Heart right ventricle (tissue), 16 donors: ENCODE measurements at regions of chr5 and their contacts with region 1.

Region 1: DNA sequence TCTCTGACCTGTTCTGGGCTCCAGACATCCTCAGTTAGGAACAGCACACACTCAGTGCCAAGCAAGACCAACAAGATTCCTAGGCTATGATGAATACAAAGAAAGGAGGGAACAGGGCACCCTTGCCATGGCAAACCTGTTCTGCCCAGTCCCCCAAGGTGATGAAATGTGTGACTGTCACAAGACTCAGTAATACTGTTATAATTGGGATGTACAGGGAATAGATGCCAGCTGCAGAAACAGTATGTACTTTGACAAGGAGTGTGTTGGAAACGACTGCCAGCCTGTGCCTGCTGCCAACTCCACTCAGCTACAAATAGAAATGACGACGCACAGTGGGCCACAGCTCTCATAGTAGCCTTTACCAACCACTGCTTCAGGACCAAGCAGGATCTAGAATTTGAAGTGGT is 453.0 kb downstream of the EFNA5 start:
- DNase-seq: peak; percentile 64 to 79
- ATAC-seq: peak; percentile 88 to 99 (median 97)
- H3K4me3 ChIP-seq: no peak overlapping the region
- H3K27ac ChIP-seq: peak overlapping the region; percentile 55 to 83 (median 72)
- H3K4me1 ChIP-seq: peaks cover 0 to 35% (median 7%) of the 10 kb centered on the region in 9 donors
- H3K27me3 ChIP-seq: no peaks in the 10 kb centered on the region
- CTCF ChIP-seq: no peak

Region 2: GRCh38 chr5:107104040-107104995 is 113.4 kb before region 1 on chr5:
- intact Hi-C with region 1: loop called in 5 of 10 experiments (anchors 10 kb)
- DNase-seq: peak in 1 of 2 donors; percentile 16
- ATAC-seq: peak; percentile 69 to 96 (median 83)
- H3K4me3 ChIP-seq: no peak overlapping the region
- H3K27ac ChIP-seq: peak overlapping the region in 6 of 10 donors; percentile 24 to 55 (median 44)
- H3K4me1 ChIP-seq: no peaks in the 10 kb centered on the region
- H3K27me3 ChIP-seq: no peaks in the 10 kb centered on the region
- CTCF ChIP-seq: peak in 7 of 9 donors; percentile 19 to 57 (median 44)

Region 3: GRCh38 chr5:107129051-107129450 is 88.7 kb before region 1 on chr5:
- intact Hi-C with region 1: loop called in 1 of 10 experiments (anchors 10 kb)
- DNase-seq: no peak
- ATAC-seq: no peak
- H3K4me3 ChIP-seq: no peak overlapping the region
- H3K27ac ChIP-seq: no peak overlapping the region
- H3K4me1 ChIP-seq: peaks cover 0 to 14% (median 6%) of the 10 kb centered on the region in 9 donors
- H3K27me3 ChIP-seq: no peaks in the 10 kb centered on the region
- CTCF ChIP-seq: no peak